Mammary epithelial cell (primary cell): ENCODE measurements at regions of chr2 and their contacts with region 1.

Region 1: DNA sequence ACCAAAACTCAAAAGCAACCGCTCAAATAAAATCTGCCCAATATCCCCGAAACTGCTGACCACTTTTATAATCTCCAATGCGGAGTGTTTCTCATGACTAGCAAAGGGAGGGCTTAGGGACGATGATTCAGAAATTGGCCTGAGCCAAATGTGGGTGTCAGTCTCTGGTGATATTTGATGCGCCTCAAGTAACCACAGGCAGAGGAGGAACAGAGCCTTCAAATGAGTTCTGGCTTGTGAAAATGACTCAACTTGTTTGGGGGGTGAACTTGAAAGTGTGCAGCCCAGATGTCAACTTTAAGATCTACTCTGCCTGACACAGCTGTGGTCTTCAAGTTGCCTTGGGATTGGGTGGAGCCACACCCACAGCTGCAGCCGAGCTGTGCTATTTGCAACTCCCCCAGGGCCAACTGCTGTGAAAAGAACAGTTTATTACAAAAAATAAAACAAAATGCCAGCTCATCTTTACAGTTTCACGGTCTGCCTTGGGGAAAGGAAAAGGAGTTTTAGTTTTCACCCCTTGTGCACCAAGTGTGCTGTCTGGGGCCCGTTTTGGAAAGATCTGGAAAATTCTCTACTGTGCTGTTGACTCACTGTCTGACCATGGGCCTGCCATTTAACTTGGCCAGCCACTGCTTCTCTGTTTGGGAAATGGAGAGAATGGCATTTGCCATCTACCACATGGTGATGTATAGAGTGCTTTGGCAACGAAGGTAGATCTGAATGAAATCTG is 222.1 kb downstream of the MTX2 start:
- DNase-seq: peak; percentile 99
- H3K4me3 ChIP-seq: no peak overlapping the region
- H3K27ac ChIP-seq: peak overlapping the region; percentile 55
- H3K4me1 ChIP-seq: peaks cover 20% of the 10 kb centered on the region
- H3K27me3 ChIP-seq: no peaks in the 10 kb centered on the region
- CTCF ChIP-seq: no peak

Region 2: DNA sequence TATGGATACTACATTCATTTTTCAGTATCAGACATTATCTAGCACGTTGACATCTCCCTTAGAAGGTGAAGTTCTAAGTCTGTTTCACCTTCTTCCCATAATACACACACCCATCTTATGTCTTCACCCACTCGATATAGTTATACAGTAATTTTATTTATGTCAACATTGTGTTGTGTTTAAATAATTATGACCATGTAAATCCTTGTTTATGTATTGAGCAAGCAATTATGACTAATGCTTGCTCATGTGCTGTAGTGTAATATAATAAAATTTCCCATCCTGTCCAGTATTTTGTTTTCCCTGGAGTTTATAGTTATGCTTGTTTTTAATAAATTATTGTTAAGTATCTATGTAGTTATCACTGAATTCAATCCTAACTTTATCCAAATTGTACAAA is 58.9 kb before region 1 on chr2:
- CTCF ChIA-PET with region 1: no interaction called
- dilution Hi-C with region 1: no loop called
- in situ Hi-C with region 1: no loop called
- intact Hi-C with region 1: no loop called
- DNase-seq: peak; percentile 27
- H3K4me3 ChIP-seq: no peak overlapping the region
- H3K27ac ChIP-seq: no peak overlapping the region
- H3K4me1 ChIP-seq: no peaks in the 10 kb centered on the region
- H3K27me3 ChIP-seq: no peaks in the 10 kb centered on the region
- CTCF ChIP-seq: no peak

Region 3: GRCh38 chr2:176473177-176473576 is 18.2 kb before region 1 on chr2:
- CTCF ChIA-PET with region 1: no interaction called
- dilution Hi-C with region 1: no loop called
- in situ Hi-C with region 1: no loop called
- intact Hi-C with region 1: loop called (anchors 2 kb)
- DNase-seq: peak; percentile 96
- H3K4me3 ChIP-seq: peak overlapping the region in 2 of 3 experiments; percentile 21 to 29
- H3K27ac ChIP-seq: no peak overlapping the region
- H3K4me1 ChIP-seq: peaks cover 11% of the 10 kb centered on the region
- H3K27me3 ChIP-seq: no peaks in the 10 kb centered on the region
- CTCF ChIP-seq: no peak

Region 4: GRCh38 chr2:176514805-176515500 is 23.6 kb after region 1 on chr2:
- CTCF ChIA-PET with region 1: no interaction called
- dilution Hi-C with region 1: no loop called
- in situ Hi-C with region 1: no loop called
- intact Hi-C with region 1: loop called (anchors 2 kb)
- DNase-seq: peak; percentile 95
- H3K4me3 ChIP-seq: no peak overlapping the region
- H3K27ac ChIP-seq: peak overlapping the region; percentile 59
- H3K4me1 ChIP-seq: peaks cover 14% of the 10 kb centered on the region
- H3K27me3 ChIP-seq: no peaks in the 10 kb centered on the region
- CTCF ChIP-seq: no peak